Prostate gland (tissue), 2 donors: ENCODE measurements at regions of chr4 and their contacts with region 1.

Region 1: DNA sequence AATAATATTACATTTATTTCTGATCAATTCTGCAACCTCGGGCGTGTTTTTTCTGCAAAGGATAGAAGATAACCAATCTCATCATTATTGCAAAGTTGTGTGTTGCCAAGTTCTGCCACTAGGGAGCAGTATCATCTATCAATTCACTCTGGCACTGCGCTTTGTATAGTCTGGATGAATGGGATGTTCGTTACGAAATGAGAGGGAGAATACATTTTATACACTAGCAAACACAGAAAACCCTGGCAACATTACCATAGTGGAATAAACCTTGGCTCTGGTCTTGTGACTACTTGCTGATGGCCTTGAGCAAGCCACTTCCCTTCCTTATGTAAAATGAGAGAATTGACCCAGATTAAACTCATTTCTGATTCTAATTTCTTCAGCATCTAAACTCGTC is 97.5 kb upstream of the ZNF518B start:
- DNase-seq: peak; percentile 45
- H3K4me3 ChIP-seq: no peak overlapping the region
- H3K27ac ChIP-seq: no peak overlapping the region
- H3K4me1 ChIP-seq: no peaks in the 10 kb centered on the region
- H3K27me3 ChIP-seq: no peaks in the 10 kb centered on the region
- CTCF ChIP-seq: peak; percentile 41 to 81 (median 73)
- POLR2A ChIP-seq: no peak

Region 2: GRCh38 chr4:10164877-10165283 is 389.8 kb before region 1 on chr4:
- intact Hi-C with region 1: loop called (anchors 5 kb)
- DNase-seq: peak; percentile 16
- H3K4me3 ChIP-seq: no peak overlapping the region
- H3K27ac ChIP-seq: no peak overlapping the region
- H3K4me1 ChIP-seq: no peaks in the 10 kb centered on the region
- H3K27me3 ChIP-seq: no peaks in the 10 kb centered on the region
- CTCF ChIP-seq: peak in 3 of 4 experiments; percentile 33 to 69 (median 57)
- POLR2A ChIP-seq: no peak

Region 3: DNA sequence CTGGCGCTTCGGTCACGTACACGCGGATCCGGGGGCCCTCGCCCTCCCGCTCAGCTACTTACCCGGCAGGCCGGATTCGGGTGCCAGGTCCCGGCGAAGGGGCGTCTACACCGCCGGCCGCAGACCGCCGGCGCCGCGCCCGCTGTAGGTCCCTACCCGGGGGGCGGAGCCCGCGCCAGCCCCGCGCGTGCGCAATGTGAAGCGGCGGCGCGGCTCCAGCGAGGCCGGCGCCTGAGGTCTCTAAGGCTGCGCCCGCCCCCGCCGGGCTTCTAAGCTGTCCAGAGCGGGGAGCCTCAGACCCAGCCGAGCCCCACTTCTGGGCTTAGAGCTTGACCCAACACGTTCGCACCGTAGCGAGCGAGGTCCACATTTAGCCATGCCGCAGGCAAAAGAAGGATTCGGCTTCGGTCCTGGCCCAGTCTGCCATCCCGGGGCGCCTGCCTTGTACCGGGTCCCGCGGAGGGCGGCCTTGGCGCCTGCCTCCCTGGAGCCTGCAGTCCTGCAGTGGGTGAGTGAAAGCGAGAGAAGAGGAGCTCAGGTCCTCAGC is 97.4 kb before region 1 on chr4 and contains the start of gene ZNF518B:
- intact Hi-C with region 1: loop called (anchors 5 kb)
- DNase-seq: peak; percentile 31
- H3K4me3 ChIP-seq: peak within 1 kb of the TSS; percentile 57 to 58
- H3K27ac ChIP-seq: peak within 1 kb of the TSS; percentile 59
- H3K4me1 ChIP-seq: no peaks in the 10 kb centered on the region
- H3K27me3 ChIP-seq: no peaks in the 10 kb centered on the region
- CTCF ChIP-seq: no peak
- POLR2A ChIP-seq: peak; percentile 31
- total RNA-seq, gene ZNF518B: 23.3 to 60.4 TPM

Region 4: GRCh38 chr4:10743357-10743756 is 188.7 kb after region 1 on chr4:
- intact Hi-C with region 1: no loop called
- DNase-seq: no peak
- H3K4me3 ChIP-seq: no peak overlapping the region
- H3K27ac ChIP-seq: no peak overlapping the region
- H3K4me1 ChIP-seq: no peaks in the 10 kb centered on the region
- H3K27me3 ChIP-seq: no peaks in the 10 kb centered on the region
- CTCF ChIP-seq: no peak
- POLR2A ChIP-seq: no peak